Activated CD4-positive, alpha-beta T cell treated with anti-CD3 and anti-CD28 coated beads for 36 hours (primary cell): ENCODE measurements at regions of chr16 and their contacts with region 1.

Region 1: GRCh38 chr16:71808593-71809459 is at the start of gene AP1G1:
- DNase-seq: peak; percentile 96
- ATAC-seq: peak; percentile 92
- H3K4me3 Mint-ChIP-seq: peak within 1 kb of the TSS; percentile 91
- H3K27ac Mint-ChIP-seq: peak within 1 kb of the TSS; percentile 100
- H3K4me1 Mint-ChIP-seq: peaks cover 48% of the 10 kb centered on the region
- H3K27me3 Mint-ChIP-seq: no peaks in the 10 kb centered on the region
- total RNA-seq, gene AP1G1: 65.5 to 68.8 TPM

Region 2: GRCh38 chr16:71709231-71709781 is 99.5 kb before region 1 on chr16:
- CTCF ChIA-PET with region 1: no interaction called
- POLR2A ChIA-PET with region 1: no interaction called
- intact Hi-C with region 1: no loop called
- DNase-seq: no peak
- ATAC-seq: no peak
- H3K4me3 Mint-ChIP-seq: no peak overlapping the region
- H3K27ac Mint-ChIP-seq: no peak overlapping the region
- H3K4me1 Mint-ChIP-seq: peaks cover 6% of the 10 kb centered on the region
- H3K27me3 Mint-ChIP-seq: no peaks in the 10 kb centered on the region

Region 3: GRCh38 chr16:71723537-71724319 is 85.1 kb before region 1 on chr16:
- CTCF ChIA-PET with region 1: no interaction called
- POLR2A ChIA-PET with region 1: no interaction called
- intact Hi-C with region 1: loop called in 1 of 2 experiments (anchors 1 kb)
- DNase-seq: peak; percentile 87
- ATAC-seq: peak; percentile 87
- H3K4me3 Mint-ChIP-seq: peak overlapping the region; percentile 95
- H3K27ac Mint-ChIP-seq: peak overlapping the region; percentile 68
- H3K4me1 Mint-ChIP-seq: peaks cover 16% of the 10 kb centered on the region
- H3K27me3 Mint-ChIP-seq: no peaks in the 10 kb centered on the region

Region 4: DNA sequence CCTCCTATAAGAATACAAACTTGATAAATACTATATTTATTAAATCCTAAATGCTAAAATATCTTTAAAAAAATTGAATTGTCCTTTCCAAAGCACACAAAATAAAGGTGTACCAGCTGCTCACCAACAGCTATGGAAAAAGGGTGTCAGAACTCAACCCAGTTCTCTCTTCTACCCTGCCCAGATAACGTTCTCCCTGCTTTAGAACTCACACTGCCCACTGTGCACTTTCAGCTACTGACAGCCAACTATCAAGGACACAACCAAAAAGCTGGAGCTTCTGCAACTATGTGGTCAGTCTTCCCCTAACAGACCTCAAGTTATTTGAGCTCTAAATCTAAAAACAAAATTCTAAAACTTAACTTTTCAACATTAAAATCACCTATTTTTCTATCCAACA is 13.9 kb before region 1 on chr16:
- CTCF ChIA-PET with region 1: interaction called, 5 read pairs
- POLR2A ChIA-PET with region 1: interaction called, 6 read pairs
- intact Hi-C with region 1: loop called in 1 of 2 experiments (anchors 1 kb)
- DNase-seq: no peak
- ATAC-seq: peak; percentile 60
- H3K4me3 Mint-ChIP-seq: no peak overlapping the region
- H3K27ac Mint-ChIP-seq: peak overlapping the region; percentile 34
- H3K4me1 Mint-ChIP-seq: peaks cover 63% of the 10 kb centered on the region
- H3K27me3 Mint-ChIP-seq: no peaks in the 10 kb centered on the region

Region 5: DNA sequence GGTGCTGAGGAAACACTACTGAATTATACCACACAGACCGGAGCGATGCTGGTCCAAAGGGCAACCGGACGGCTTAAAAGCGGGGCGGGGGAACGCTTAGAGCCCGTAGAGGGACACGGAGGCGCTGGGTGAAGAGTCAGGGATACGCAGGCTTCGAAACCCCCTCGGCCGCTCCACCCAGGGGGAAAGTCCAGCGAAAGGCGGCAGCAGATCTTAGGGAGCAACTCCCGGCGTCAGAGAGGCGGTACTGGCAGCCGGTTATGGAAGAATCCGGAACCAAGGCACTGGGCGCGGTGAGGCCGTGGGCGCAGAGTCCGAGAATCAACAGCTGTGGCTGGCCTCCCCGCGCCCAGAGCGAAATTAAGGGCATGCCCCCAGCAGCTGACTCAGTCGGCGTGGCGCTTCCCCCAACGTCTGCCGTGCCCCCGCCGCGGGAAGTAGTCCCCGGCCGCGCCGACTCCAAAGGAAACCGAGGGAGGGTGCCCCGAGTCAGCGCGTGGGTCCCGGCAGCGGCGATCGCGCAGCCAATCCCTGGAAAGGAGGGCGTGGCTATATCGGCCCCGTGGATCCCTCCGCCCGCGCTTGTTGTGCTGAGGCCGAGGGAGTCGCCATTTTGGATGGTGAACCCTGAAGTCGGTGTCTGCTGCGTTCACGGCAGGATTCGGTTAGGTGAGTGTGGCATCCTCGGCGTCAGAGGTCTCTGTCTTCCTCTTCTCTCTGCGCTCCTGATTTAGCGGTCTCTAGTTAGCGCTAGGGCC is 86.3 kb after region 1 on chr16 and contains the start of gene IST1:
- CTCF ChIA-PET with region 1: interaction called, 4 read pairs
- POLR2A ChIA-PET with region 1: interaction called, 3 read pairs
- intact Hi-C with region 1: loop called (anchors 1 kb)
- DNase-seq: peak; percentile 99
- ATAC-seq: peak; percentile 92
- H3K4me3 Mint-ChIP-seq: peak within 1 kb of the TSS; percentile 96
- H3K27ac Mint-ChIP-seq: peak within 1 kb of the TSS; percentile 94
- H3K4me1 Mint-ChIP-seq: peaks cover 31% of the 10 kb centered on the region
- H3K27me3 Mint-ChIP-seq: no peaks in the 10 kb centered on the region
- total RNA-seq, gene IST1: 170 to 179 TPM